Activated naive CD4-positive, alpha-beta T cell treated with anti-CD3 and anti-CD28 coated beads for 36 hours (primary cell): ENCODE measurements at regions of chr7 and their contacts with region 1.

Region 1: GRCh38 chr7:38232502-38233366 is 40.7 kb downstream of the TARP start:
- DNase-seq: peak; percentile 82
- H3K4me3 Mint-ChIP-seq: peak overlapping the region; percentile 9
- H3K27ac Mint-ChIP-seq: peak overlapping the region; percentile 2
- H3K4me1 Mint-ChIP-seq: peaks cover 21% of the 10 kb centered on the region
- H3K27me3 Mint-ChIP-seq: no peaks in the 10 kb centered on the region

Region 2: GRCh38 chr7:36639826-36640225 is 1592.9 kb before region 1 on chr7:
- CTCF ChIA-PET with region 1: no interaction called
- intact Hi-C with region 1: no loop called
- DNase-seq: peak; percentile 54
- H3K4me3 Mint-ChIP-seq: no peak overlapping the region
- H3K27ac Mint-ChIP-seq: no peak overlapping the region
- H3K4me1 Mint-ChIP-seq: peaks cover 61% of the 10 kb centered on the region
- H3K27me3 Mint-ChIP-seq: no peaks in the 10 kb centered on the region

Region 3: DNA sequence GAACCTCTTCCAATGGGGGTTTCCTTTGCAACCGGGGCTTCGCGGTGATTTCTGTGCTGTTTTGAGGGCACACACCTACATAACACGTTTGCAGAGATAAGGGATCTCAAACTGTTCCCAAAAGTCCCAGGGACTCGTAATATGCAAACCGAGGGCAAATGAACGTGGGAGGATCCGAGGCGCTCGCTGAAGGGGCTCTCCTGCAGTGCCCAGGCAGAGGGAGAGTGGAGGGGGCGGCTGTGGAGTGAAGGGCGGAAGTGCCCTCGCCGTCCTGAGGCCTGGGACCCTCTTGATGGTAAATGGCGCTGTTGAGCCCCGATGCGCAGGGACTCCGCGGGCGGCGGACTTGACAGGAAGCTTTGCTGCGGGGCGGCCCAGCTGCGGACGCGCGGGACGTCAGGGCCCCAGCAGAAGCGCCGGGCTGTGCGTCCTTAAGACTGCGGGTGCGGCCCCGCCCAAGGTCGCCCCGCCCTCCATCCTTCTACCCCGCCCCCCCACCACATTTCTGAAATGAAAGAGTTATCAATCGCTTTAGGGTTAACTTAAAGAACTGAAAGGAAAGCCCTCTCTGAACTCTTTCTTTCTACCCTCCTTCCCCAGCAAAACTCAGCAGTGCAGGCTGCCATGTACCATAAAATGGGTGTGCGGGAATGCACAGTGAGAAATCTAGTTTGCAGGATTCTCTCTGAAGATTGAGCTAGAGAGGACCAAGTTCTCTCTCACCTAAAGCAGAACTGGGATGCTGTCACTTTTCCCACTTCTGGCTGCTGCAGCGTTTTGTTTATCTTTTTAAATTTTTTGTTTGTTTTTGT is 1181.7 kb after region 1 on chr7:
- CTCF ChIA-PET with region 1: no interaction called
- intact Hi-C with region 1: loop called (anchors 2 kb)
- DNase-seq: peak; percentile 72
- H3K4me3 Mint-ChIP-seq: peak overlapping the region; percentile 73
- H3K27ac Mint-ChIP-seq: no peak overlapping the region
- H3K4me1 Mint-ChIP-seq: peaks cover 4% of the 10 kb centered on the region
- H3K27me3 Mint-ChIP-seq: peaks cover 31% of the 10 kb centered on the region